AG04450 (cell line): ENCODE measurements at regions of chr11 and their contacts with region 1.

Region 1: DNA sequence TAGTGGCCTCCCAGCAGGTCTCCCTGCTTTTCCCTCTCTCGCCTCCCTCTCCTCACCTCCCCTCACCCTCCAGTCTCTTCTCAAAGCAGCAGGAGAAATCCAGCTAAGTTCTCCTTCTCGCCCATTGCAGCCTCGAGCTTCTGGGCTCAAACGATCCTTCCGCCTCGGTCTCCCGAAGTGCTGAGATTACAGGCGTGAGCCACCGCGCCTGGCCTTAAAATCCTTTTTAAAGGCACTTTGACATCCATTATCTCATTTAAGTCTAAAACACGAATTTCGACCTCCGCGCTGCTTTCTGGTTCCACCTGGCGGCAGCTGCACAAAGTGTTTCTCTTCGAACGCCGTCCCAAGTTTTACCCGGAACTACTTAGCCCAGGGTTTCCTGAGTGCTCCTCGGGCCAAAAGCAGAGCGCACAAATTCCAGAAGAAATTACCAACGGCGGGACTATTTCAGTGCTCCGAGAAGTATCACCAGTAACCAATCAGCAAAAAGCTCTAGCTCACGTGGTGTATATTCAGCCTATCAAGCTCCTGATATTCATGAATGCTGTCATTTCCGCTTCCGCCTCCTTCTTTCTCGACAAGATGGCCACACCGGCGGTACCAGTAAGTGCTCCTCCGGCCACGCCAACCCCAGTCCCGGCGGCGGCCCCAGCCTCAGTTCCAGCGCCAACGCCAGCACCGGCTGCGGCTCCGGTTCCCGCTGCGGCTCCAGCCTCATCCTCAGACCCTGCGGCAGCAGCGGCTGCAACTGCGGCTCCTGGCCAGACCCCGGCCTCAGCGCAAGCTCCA is at the start of gene EIF3F:
- DNase-seq: peak; percentile 99
- H3K4me3 ChIP-seq: peak within 1 kb of the TSS; percentile 72
- H3K27ac ChIP-seq: peak within 1 kb of the TSS; percentile 53
- H3K27me3 ChIP-seq: no peaks in the 10 kb centered on the region
- CTCF ChIP-seq: peak; percentile 86
- polyA plus RNA-seq, gene EIF3F: 216 and 297 TPM in 2 replicates

Region 2: GRCh38 chr11:7804226-7804625 is 182.7 kb before region 1 on chr11:
- CTCF ChIA-PET with region 1: no interaction called
- POLR2A ChIA-PET with region 1: no interaction called
- DNase-seq: no peak
- H3K4me3 ChIP-seq: no peak overlapping the region
- H3K27ac ChIP-seq: no peak overlapping the region
- H3K27me3 ChIP-seq: no peaks in the 10 kb centered on the region
- CTCF ChIP-seq: no peak

Region 3: GRCh38 chr11:7892840-7893254 is 94.1 kb before region 1 on chr11:
- CTCF ChIA-PET with region 1: interaction called, 233 read pairs
- POLR2A ChIA-PET with region 1: interaction called, 4 read pairs
- DNase-seq: peak; percentile 50
- H3K4me3 ChIP-seq: no peak overlapping the region
- H3K27ac ChIP-seq: peak overlapping the region; percentile 42
- H3K27me3 ChIP-seq: no peaks in the 10 kb centered on the region
- CTCF ChIP-seq: peak; percentile 72

Region 4: DNA sequence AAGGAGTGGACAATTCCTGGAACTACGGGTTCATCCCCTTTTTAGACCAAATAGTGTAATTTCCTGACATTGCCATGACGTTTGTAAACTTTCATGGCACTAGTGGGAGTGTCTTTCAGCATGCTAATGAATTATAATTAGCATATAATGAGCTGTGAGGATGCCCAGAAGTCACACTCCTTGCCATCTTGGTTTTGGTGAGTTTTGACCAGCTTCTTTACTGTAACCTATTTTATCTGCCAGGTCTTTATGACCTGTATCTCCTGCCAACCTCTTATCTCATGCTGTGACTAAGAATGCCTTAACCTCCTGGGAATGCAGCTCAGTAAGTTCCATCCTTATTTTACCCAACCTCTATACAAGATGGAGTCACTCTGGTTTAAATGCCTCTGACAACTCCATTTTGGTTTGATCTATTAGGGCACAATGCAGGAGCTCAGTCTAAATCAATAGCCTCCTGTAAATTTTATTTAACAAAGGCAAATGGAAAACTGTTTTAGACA is 76.6 kb before region 1 on chr11:
- CTCF ChIA-PET with region 1: interaction called, 261 read pairs
- POLR2A ChIA-PET with region 1: interaction called, 14 read pairs
- DNase-seq: no peak
- H3K4me3 ChIP-seq: no peak overlapping the region
- H3K27ac ChIP-seq: no peak overlapping the region
- H3K27me3 ChIP-seq: no peaks in the 10 kb centered on the region
- CTCF ChIP-seq: no peak

Region 5: GRCh38 chr11:7965386-7965785 is 21.6 kb before region 1 on chr11 and contains the start of gene NLRP10:
- CTCF ChIA-PET with region 1: interaction called, 27 read pairs
- POLR2A ChIA-PET with region 1: interaction called, 5 read pairs
- DNase-seq: peak; percentile 67
- H3K4me3 ChIP-seq: peak within 1 kb of the TSS; percentile 17; the same call in 1 of the 2 replicates
- H3K27ac ChIP-seq: peak within 1 kb of the TSS; percentile 98
- H3K27me3 ChIP-seq: no peaks in the 10 kb centered on the region
- CTCF ChIP-seq: no peak
- polyA plus RNA-seq, gene NLRP10: 2.4 and 2.8 TPM in 2 replicates